MCF 10A (cell line): ENCODE measurements at regions of chr11 and their contacts with region 1.

Region 1: GRCh38 chr11:66288671-66289547 is at the start of gene YIF1A:
- DNase-seq: peak; percentile 99
- H3K4me3 Mint-ChIP-seq: peak within 1 kb of the TSS; percentile 90
- H3K27ac Mint-ChIP-seq: peak within 1 kb of the TSS; percentile 95
- H3K4me1 Mint-ChIP-seq: peaks cover 12% of the 10 kb centered on the region
- H3K27me3 Mint-ChIP-seq: peaks cover 13% of the 10 kb centered on the region
- CTCF ChIP-seq: no peak
- total RNA-seq, gene YIF1A: 143 and 144 TPM in 2 replicates

Region 2: GRCh38 chr11:66268283-66268951 is 20.5 kb before region 1 on chr11 and contains the start of gene RAB1B:
- CTCF ChIA-PET with region 1: interaction called, 3 read pairs
- POLR2A ChIA-PET with region 1: interaction called, 17 read pairs
- intact Hi-C with region 1: loop called (anchors 1 kb)
- DNase-seq: peak; percentile 100
- H3K4me3 Mint-ChIP-seq: peak within 1 kb of the TSS; percentile 96
- H3K27ac Mint-ChIP-seq: peak within 1 kb of the TSS; percentile 91
- H3K4me1 Mint-ChIP-seq: peaks cover 2% of the 10 kb centered on the region
- H3K27me3 Mint-ChIP-seq: no peaks in the 10 kb centered on the region
- CTCF ChIP-seq: no peak
- total RNA-seq, gene RAB1B: 73.4 and 87.0 TPM in 2 replicates

Region 3: GRCh38 chr11:66328307-66329144 is 39.6 kb after region 1 on chr11:
- CTCF ChIA-PET with region 1: no interaction called
- POLR2A ChIA-PET with region 1: interaction called, 13 read pairs
- intact Hi-C with region 1: no loop called
- DNase-seq: peak; percentile 78
- H3K4me3 Mint-ChIP-seq: no peak overlapping the region
- H3K27ac Mint-ChIP-seq: peak overlapping the region; percentile 4
- H3K4me1 Mint-ChIP-seq: peaks cover 46% of the 10 kb centered on the region
- H3K27me3 Mint-ChIP-seq: no peaks in the 10 kb centered on the region
- CTCF ChIP-seq: peak; percentile 91

Region 4: GRCh38 chr11:66336234-66337102 is 47.6 kb after region 1 on chr11 and contains the start of gene RIN1:
- CTCF ChIA-PET with region 1: no interaction called
- POLR2A ChIA-PET with region 1: interaction called, 27 read pairs
- intact Hi-C with region 1: no loop called
- DNase-seq: peak; percentile 96
- H3K4me3 Mint-ChIP-seq: peak within 1 kb of the TSS; percentile 89
- H3K27ac Mint-ChIP-seq: peak within 1 kb of the TSS; percentile 95
- H3K4me1 Mint-ChIP-seq: peaks cover 30% of the 10 kb centered on the region
- H3K27me3 Mint-ChIP-seq: no peaks in the 10 kb centered on the region
- CTCF ChIP-seq: no peak
- total RNA-seq, gene RIN1: 38.7 and 50.2 TPM in 2 replicates